ENCODE measurements at regions of chr13 and their contacts with region 1.

Region 1: GRCh38 chr13:37602747-37603381 is 4.3 kb upstream of the POSTN start:
- DNase-seq: no peak
- H3K4me3 ChIP-seq: no peak overlapping the region
- H3K4me3 Mint-ChIP-seq: no peak overlapping the region
- H3K27ac Mint-ChIP-seq: no peak overlapping the region
- H3K4me1 ChIP-seq: no peaks in the 10 kb centered on the region
- H3K4me1 Mint-ChIP-seq: no peaks in the 10 kb centered on the region
- H3K27me3 ChIP-seq: no peaks in the 10 kb centered on the region; the same call in 1 of the 2 replicates
- H3K27me3 Mint-ChIP-seq: peaks cover 13% of the 10 kb centered on the region
- CTCF ChIP-seq: peak in 1 of 2 experiments; percentile 46

Region 2: DNA sequence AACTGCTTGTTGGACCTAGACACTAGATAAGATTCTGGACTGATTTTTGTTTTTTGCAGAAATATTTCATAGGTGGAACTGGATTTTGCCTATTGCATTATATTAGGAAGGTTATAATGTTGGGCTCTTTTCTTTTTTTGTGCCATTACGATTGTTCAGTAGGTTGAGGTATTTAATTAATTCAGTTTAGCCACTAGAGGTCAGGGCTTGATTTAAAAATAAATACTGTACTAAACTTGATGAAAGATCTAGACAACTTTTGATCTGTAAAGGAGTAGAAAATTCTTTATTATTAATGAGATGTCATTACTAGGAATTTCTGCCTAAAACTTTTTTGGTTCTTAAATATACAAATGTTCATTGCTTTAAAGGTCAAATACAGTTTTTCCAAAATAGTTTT is 528.2 kb before region 1 on chr13:
- CTCF ChIA-PET with region 1: no interaction called
- POLR2A ChIA-PET with region 1: no interaction called
- intact Hi-C with region 1: loop called (anchors 10 kb)
- DNase-seq: no peak
- H3K4me3 ChIP-seq: no peak overlapping the region
- H3K4me3 Mint-ChIP-seq: no peak overlapping the region
- H3K27ac Mint-ChIP-seq: no peak overlapping the region
- H3K4me1 ChIP-seq: no peaks in the 10 kb centered on the region
- H3K4me1 Mint-ChIP-seq: no peaks in the 10 kb centered on the region
- H3K27me3 ChIP-seq: no peaks in the 10 kb centered on the region; the same call in 1 of the 2 replicates
- H3K27me3 Mint-ChIP-seq: peaks cover 15% of the 10 kb centered on the region
- CTCF ChIP-seq: no peak

Region 3: DNA sequence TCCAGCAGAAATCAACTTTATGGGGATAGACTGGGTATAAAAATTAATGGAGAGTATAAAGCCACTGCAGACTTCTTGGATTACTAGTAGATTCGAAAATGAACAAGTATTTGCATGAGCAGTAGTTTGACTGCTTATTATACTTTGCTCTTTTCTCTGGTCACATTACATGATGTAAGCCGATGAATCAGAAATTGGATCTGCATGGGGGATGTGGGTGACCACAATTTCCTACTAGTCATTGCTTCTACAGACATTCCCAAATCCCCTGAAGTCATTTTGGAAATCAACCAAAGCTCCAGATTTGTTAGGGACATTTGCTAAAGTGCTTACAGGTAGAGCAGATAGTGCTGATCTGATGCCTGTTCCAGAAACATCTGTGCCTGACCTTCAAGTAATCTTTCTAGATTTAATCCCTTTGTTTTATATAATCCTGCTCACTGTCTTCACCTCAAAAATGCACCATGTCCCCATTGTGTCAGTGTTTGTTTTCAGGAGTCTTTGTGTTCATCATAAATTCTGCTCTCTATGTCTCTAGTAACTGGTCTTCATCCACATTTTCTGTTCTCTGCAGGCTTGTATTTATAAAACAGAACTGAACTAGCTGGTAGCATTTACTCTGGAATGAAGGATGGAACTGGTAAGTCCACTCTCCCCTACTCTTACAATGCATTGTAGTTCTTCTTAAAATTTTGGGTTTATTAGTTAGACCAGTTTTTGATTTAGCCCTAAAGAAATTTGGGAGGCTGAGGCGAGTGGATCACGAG is 295.9 kb before region 1 on chr13:
- CTCF ChIA-PET with region 1: interaction called, 3 read pairs
- POLR2A ChIA-PET with region 1: no interaction called
- intact Hi-C with region 1: loop called (anchors 1 kb)
- DNase-seq: no peak
- H3K4me3 ChIP-seq: no peak overlapping the region
- H3K4me3 Mint-ChIP-seq: no peak overlapping the region
- H3K27ac Mint-ChIP-seq: no peak overlapping the region
- H3K4me1 ChIP-seq: no peaks in the 10 kb centered on the region
- H3K4me1 Mint-ChIP-seq: no peaks in the 10 kb centered on the region
- H3K27me3 ChIP-seq: no peaks in the 10 kb centered on the region
- H3K27me3 Mint-ChIP-seq: peaks cover 5% of the 10 kb centered on the region
- CTCF ChIP-seq: no peak